CD14-positive monocyte (primary cell): ENCODE measurements at regions of chr14 and their contacts with region 1.

Region 1: GRCh38 chr14:95495538-95496025 is 20.9 kb downstream of the SYNE3 start:
- DNase-seq: peak; percentile 84 to 97 (median 91)
- H3K4me3 ChIP-seq: peak overlapping the region in 1 of 3 experiments; percentile 42
- H3K4me3 Mint-ChIP-seq: peak overlapping the region; percentile 51 to 77
- H3K27ac ChIP-seq: peak overlapping the region; percentile 89 to 97
- H3K27ac Mint-ChIP-seq: peak overlapping the region; percentile 94 to 98 (median 97)
- H3K4me1 ChIP-seq: peaks cover 47 to 52% of the 10 kb centered on the region in 2 donors
- H3K4me1 Mint-ChIP-seq: peaks cover 65% of the 10 kb centered on the region
- H3K27me3 ChIP-seq: no peaks in the 10 kb centered on the region
- H3K27me3 Mint-ChIP-seq: no peaks in the 10 kb centered on the region
- CTCF ChIP-seq: no peak

Region 2: GRCh38 chr14:95452176-95452892 is 43.2 kb before region 1 on chr14:
- intact Hi-C with region 1: no loop called
- DNase-seq: no peak
- H3K4me3 ChIP-seq: no peak overlapping the region
- H3K4me3 Mint-ChIP-seq: no peak overlapping the region
- H3K27ac ChIP-seq: no peak overlapping the region
- H3K27ac Mint-ChIP-seq: peak overlapping the region in 1 of 7 donors; percentile 55
- H3K4me1 ChIP-seq: no peaks in the 10 kb centered on the region
- H3K4me1 Mint-ChIP-seq: no peaks in the 10 kb centered on the region
- H3K27me3 ChIP-seq: no peaks in the 10 kb centered on the region
- H3K27me3 Mint-ChIP-seq: peaks cover 0 to 2% (median 0%) of the 10 kb centered on the region in 3 donors
- CTCF ChIP-seq: peak; percentile 18

Region 3: GRCh38 chr14:95515596-95516552 is 20.3 kb after region 1 on chr14:
- intact Hi-C with region 1: loop called in 1 of 2 experiments (anchors 2 kb)
- DNase-seq: peak; percentile 78 to 92 (median 91)
- H3K4me3 ChIP-seq: peak overlapping the region; percentile 62 to 90 (median 63)
- H3K4me3 Mint-ChIP-seq: peak overlapping the region; percentile 86 to 95
- H3K27ac ChIP-seq: peak overlapping the region; percentile 86 to 88
- H3K27ac Mint-ChIP-seq: peak overlapping the region; percentile 88 to 96 (median 95)
- H3K4me1 ChIP-seq: peaks cover 80 to 84% of the 10 kb centered on the region in 2 donors
- H3K4me1 Mint-ChIP-seq: peaks cover 76% of the 10 kb centered on the region
- H3K27me3 ChIP-seq: no peaks in the 10 kb centered on the region
- H3K27me3 Mint-ChIP-seq: peaks cover 0 to 4% (median 0%) of the 10 kb centered on the region in 3 donors
- CTCF ChIP-seq: peak; percentile 62

Region 4: DNA sequence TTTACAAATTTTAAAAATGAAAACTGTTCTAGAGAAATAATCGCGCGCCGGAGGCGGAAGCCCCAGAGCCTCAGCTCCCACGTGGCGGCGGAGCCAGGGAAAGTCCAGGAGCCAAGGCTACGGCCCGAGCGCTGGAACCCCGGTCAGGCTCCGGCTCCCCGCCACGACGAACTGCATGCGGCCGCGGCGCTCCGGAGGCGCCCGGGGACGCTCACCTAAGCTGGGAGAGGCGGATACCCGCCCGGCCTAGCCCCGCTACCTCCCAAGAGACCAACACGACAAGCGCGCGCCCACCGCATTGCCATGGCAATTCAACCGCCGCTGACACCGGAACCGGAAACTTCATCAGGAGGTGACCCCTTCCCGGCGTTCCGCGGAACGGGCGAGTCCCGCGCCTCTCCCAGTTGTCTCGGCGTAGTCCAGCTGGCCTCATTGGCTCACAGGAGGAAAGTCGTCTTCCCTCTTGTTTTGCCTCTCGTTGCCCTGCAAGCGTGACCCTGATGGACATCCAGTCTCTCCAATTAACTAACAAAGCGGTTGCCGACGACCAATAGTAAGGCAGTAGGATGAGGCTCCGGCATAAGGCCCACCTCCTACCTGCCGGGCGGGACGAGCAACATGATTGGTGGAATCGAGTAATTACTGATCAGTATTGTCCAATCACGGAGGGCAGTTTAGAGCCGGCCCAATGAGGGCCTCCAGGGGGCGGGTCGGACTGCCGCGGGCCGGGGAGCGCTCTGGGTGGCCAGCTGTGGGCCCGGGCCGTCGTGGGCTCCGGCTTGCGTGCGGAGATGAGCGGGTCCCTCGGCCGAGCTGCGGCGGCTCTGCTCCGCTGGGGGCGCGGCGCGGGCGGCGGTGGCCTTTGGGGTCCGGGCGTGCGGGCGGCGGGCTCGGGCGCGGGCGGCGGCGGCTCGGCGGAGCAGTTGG is 39.0 kb after region 1 on chr14 and contains the start of gene GLRX5:
- intact Hi-C with region 1: loop called (anchors 5 kb)
- DNase-seq: peak; percentile 99 to 100 (median 99)
- H3K4me3 ChIP-seq: peak within 1 kb of the TSS; percentile 73 to 90 (median 83)
- H3K4me3 Mint-ChIP-seq: peak within 1 kb of the TSS; percentile 93 to 96
- H3K27ac ChIP-seq: peak within 1 kb of the TSS; percentile 58 to 83
- H3K27ac Mint-ChIP-seq: peak within 1 kb of the TSS; percentile 88 to 95 (median 92)
- H3K4me1 ChIP-seq: peaks cover 28 to 34% of the 10 kb centered on the region in 2 donors
- H3K4me1 Mint-ChIP-seq: peaks cover 47% of the 10 kb centered on the region
- H3K27me3 ChIP-seq: no peaks in the 10 kb centered on the region
- H3K27me3 Mint-ChIP-seq: peaks cover 0 to 2% (median 0%) of the 10 kb centered on the region in 3 donors
- CTCF ChIP-seq: no peak
- polyA plus RNA-seq, gene GLRX5: 10.9 to 43.1 (median 31.1) TPM

Region 5: DNA sequence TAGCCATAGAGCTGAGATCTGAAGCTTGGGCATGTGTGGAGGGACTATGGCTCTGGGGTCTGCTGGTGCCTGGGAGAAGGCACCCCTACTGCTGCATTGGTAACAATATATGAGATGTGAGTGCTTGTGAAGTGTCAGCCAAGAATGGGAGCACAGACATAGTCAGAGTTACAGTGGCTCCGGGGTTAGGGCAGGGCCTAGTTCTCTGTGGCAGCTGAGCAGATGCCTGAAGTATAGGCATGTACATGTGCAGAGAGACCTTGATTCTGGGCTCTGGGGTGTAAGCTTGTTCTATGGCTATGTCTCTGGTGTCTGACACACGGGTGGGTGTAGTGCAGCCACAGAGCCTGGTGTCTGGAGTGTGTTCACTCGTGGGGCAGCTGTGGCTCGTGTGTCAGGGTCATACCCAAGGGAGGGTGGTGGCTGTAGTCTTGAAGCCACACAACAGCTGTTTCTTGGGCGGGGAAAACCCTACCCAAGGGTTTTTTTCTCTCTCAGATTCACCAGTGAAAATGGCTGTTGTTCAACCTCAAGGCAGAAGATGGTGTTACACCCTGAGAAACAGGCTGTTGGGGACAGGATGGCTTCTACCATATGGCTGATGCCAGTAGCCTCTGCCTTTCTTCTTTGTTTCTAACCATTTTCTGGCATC is 230.2 kb after region 1 on chr14:
- intact Hi-C with region 1: no loop called
- DNase-seq: no peak
- H3K4me3 ChIP-seq: no peak overlapping the region
- H3K4me3 Mint-ChIP-seq: no peak overlapping the region
- H3K27ac ChIP-seq: no peak overlapping the region
- H3K27ac Mint-ChIP-seq: no peak overlapping the region
- H3K4me1 ChIP-seq: no peaks in the 10 kb centered on the region
- H3K4me1 Mint-ChIP-seq: no peaks in the 10 kb centered on the region
- H3K27me3 ChIP-seq: no peaks in the 10 kb centered on the region
- H3K27me3 Mint-ChIP-seq: peaks cover 2 to 8% (median 5%) of the 10 kb centered on the region in 3 donors
- CTCF ChIP-seq: no peak

Region 6: DNA sequence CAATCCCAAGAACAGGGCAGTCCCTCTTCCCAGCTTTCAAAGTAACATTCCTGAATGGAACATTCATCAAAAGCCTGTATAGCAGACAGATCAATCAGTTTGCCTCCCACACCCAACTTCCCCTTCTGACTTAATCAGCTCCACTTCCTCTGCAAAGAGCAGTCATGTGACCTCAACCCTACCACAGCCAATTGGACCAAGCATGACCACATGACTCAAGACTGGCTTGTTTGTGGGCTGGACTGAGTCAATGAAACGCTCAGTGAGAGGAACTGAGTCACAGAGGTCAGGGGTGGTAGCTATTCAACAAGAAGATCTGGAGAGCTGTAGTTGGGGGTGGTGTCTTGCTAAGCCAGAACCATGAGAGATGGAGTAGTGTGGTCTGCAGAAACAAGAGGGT is 339.7 kb after region 1 on chr14:
- intact Hi-C with region 1: no loop called
- DNase-seq: peak in 1 of 3 donors; percentile 5
- H3K4me3 ChIP-seq: no peak overlapping the region
- H3K4me3 Mint-ChIP-seq: no peak overlapping the region
- H3K27ac ChIP-seq: no peak overlapping the region
- H3K27ac Mint-ChIP-seq: peak overlapping the region in 1 of 7 donors; percentile 4
- H3K4me1 ChIP-seq: no peaks in the 10 kb centered on the region
- H3K4me1 Mint-ChIP-seq: no peaks in the 10 kb centered on the region
- H3K27me3 ChIP-seq: no peaks in the 10 kb centered on the region
- H3K27me3 Mint-ChIP-seq: peaks cover 0 to 8% (median 0%) of the 10 kb centered on the region in 3 donors
- CTCF ChIP-seq: no peak